BJ (cell line): ENCODE measurements at regions of chr14 and their contacts with region 1.

Region 1: GRCh38 chr14:63394432-63394831 is 75.7 kb upstream of the GPHB5 start:
- DNase-seq: no peak
- H3K4me3 ChIP-seq: no peak overlapping the region
- H3K27me3 ChIP-seq: no peaks in the 10 kb centered on the region
- CTCF ChIP-seq: no peak

Region 2: DNA sequence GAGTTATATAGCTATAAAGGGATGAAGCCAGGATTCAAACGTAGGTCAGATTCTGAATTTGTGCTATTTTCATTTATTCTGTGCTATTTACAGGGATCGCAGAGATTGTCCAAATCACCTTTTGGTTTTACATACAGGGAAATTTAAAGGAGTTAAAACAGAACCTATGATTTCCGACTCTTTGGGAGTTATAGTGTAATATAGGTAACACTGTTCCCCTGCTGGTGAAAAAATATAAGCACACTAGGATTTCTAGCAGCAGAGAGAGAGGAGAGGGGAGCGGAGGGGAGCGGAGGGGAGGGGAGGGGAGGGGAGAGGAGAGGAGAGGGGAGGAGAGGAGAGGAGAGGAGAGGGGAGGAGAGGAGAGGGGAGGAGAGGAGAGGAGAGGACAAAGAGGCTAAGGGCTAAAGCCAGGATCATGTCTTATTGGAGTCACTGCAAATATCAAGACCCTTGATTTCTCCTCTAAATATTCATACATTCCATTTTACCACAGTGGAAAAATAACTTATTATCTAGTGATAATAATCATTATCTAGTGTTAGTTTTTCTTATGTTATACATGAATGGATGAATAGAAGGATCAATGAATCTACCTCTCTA is 302.9 kb before region 1 on chr14:
- CTCF ChIA-PET with region 1: no interaction called
- POLR2A ChIA-PET with region 1: no interaction called
- DNase-seq: no peak
- H3K4me3 ChIP-seq: no peak overlapping the region
- H3K27me3 ChIP-seq: no peaks in the 10 kb centered on the region
- CTCF ChIP-seq: no peak

Region 3: GRCh38 chr14:63383776-63384367 is 10.6 kb before region 1 on chr14:
- CTCF ChIA-PET with region 1: interaction called, 7 read pairs
- POLR2A ChIA-PET with region 1: interaction called, 16 read pairs
- DNase-seq: no peak
- H3K4me3 ChIP-seq: no peak overlapping the region
- H3K27me3 ChIP-seq: no peaks in the 10 kb centered on the region
- CTCF ChIP-seq: no peak

Region 4: GRCh38 chr14:63426838-63427352 is 32.5 kb after region 1 on chr14:
- CTCF ChIA-PET with region 1: no interaction called
- POLR2A ChIA-PET with region 1: no interaction called
- DNase-seq: no peak
- H3K4me3 ChIP-seq: no peak overlapping the region
- H3K27me3 ChIP-seq: no peaks in the 10 kb centered on the region
- CTCF ChIP-seq: no peak